ENCODE measurements at regions of chr5 and their contacts with region 1.

Region 1: DNA sequence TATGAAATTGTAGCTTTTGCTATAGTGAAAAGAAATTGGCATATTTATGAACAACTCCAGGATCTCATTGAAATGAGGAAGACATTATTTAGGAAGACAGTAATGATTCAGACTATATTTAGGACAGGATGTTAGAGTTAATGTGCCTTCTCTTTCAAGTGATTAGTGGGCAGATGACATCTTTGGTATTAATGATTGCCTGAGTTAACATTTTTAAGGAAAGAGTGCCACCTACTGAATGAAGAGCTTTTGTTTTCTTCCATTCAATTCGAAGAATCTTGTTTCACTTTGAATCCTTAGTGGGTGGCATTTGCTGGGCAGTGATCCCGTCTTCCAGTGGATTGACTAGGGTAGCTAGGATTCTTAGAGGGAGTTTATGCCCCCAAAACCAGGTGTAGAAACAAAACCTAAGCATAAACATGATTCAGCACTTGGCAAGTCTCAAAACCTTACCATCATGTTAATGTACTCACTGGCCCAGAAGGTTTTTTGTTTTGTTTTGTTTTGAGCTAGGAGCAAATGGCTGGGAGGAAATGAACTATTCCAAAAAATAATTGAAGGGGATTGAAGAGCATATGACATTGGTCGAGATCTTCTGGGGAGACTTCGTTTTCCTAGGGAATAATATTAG is 23.2 kb downstream of the MAP3K1 start:
- DNase-seq: peak in 5 of 42 donors; percentile 20 to 58 (median 38)

Region 2: DNA sequence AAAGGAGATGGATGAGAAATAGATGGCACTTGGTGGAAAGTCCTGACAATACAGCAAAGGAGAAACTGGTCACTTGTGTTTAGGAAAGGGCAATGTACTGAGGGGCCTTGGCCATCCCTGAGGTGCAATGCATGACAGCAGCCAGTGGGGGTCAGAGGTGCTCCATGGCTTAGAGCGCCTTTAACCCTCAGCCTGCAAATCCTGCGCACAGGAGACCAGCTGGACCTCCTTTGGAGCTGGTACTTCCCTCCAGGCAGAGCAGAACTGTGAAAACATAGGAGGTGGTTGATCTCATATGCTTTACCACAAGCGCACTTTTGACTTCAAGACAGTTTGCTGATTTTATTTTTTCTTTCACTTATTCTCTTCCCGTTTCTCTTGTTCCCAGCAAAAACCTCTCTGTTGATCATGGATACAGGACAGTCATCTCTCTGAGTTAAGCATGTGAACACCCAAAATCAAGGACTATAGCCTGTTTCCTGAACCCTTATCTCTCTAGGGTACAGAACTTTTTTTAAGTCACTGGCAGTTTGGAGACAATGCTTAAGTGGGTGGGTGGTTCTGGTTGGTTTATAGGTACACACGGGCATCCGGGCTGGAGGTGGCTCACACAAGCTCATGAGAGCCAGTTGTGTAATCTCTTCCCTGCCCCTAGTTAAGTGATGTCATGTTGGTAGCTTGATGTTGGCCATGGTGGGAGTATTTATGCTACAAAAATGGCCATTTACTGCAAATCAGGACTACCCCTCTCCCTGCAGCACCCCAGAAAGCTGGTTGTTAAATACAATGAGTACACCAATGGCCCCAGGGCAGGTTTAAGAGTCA is 567.7 kb before region 1 on chr5:
- intact Hi-C with region 1: loop called (anchors 5 kb)
- DNase-seq: peak; percentile 69 to 94 (median 84)

Measured in head of caudate nucleus (tissue), 42 donors.